AG04449 (cell line): ENCODE measurements at regions of chr11 and their contacts with region 1.

Region 1: DNA sequence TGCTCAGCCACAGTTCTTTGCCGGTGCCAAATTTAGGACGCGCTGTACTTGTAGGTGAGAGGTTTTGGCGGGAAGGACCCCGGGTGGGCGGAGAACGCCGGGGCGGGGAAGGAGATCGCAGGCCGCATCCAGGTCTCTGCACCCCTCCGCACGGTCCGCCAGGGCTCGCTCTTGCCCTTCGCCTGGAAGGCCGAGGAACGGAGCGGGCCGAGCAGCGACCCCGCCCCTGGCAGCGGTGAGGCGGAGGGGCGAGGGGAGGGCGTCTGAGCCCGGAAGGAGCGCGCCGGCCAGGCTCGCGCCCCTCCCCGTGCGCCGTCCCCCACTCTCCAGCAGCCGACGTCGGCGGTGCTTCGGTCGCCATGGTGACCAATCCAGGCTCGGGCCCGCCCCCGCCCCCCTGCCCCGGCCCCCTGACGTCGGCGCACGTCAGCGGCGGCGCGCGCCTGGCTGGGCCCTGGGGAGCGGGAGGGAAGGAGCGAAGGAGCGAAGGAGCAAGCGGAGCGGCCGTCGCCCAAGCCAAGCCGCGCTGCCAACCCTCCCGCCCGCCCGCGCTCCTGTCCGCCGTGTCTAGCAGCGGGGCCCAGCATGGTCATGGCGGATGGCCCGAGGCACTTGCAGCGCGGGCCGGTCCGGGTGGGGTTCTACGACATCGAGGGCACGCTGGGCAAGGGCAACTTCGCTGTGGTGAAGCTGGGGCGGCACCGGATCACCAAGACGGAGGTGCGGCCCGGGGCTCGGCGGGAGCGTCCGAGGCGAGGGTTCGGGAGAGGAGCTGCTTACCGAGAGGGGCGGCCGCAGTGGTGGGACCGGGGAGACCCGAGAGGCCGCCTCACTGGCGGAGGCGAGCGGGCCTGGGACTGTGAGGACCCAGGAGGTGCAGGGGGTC is at the start of gene SIK2:
- DNase-seq: no peak
- H3K4me3 ChIP-seq: peak within 1 kb of the TSS; percentile 78
- CTCF ChIP-seq: peak; percentile 98

Region 2: DNA sequence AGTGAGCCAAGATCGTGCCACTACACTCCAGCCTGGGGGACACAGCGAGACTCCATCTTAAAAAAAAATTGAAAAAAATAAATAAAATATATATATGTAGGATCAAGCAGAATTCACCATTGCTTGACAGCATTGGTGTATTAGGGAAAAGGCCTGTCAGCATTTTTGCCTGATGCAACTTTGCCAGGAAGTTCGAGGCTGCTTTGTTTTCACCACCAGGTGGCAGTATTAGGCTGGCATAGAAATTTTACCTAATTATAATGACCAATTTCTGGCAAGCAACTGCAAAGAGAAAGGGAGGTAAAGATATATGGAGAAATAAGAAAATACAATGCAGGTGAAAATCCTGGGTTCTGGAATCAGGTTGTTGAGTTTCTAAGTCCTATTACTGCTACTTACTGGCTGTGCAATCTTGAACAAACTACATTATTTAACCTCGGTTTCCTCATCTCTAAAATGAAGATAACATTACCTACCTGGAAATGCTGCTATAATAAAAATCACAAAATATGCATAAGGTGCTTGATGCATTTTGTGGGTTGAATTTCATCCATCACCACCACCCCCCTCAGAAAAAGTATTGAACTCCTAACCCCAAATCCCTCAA is 37.0 kb before region 1 on chr11:
- CTCF ChIA-PET with region 1: interaction called, 10 read pairs
- POLR2A ChIA-PET with region 1: no interaction called
- DNase-seq: no peak
- H3K4me3 ChIP-seq: no peak overlapping the region
- CTCF ChIP-seq: peak; percentile 62

Region 3: GRCh38 chr11:111612224-111612623 is 10.0 kb after region 1 on chr11:
- CTCF ChIA-PET with region 1: interaction called, 50 read pairs
- POLR2A ChIA-PET with region 1: no interaction called
- DNase-seq: no peak
- H3K4me3 ChIP-seq: no peak overlapping the region
- CTCF ChIP-seq: no peak

Region 4: GRCh38 chr11:111631666-111632039 is 29.4 kb after region 1 on chr11:
- CTCF ChIA-PET with region 1: interaction called, 13 read pairs
- POLR2A ChIA-PET with region 1: no interaction called
- DNase-seq: peak; percentile 63
- H3K4me3 ChIP-seq: no peak overlapping the region
- CTCF ChIP-seq: no peak

Region 5: DNA sequence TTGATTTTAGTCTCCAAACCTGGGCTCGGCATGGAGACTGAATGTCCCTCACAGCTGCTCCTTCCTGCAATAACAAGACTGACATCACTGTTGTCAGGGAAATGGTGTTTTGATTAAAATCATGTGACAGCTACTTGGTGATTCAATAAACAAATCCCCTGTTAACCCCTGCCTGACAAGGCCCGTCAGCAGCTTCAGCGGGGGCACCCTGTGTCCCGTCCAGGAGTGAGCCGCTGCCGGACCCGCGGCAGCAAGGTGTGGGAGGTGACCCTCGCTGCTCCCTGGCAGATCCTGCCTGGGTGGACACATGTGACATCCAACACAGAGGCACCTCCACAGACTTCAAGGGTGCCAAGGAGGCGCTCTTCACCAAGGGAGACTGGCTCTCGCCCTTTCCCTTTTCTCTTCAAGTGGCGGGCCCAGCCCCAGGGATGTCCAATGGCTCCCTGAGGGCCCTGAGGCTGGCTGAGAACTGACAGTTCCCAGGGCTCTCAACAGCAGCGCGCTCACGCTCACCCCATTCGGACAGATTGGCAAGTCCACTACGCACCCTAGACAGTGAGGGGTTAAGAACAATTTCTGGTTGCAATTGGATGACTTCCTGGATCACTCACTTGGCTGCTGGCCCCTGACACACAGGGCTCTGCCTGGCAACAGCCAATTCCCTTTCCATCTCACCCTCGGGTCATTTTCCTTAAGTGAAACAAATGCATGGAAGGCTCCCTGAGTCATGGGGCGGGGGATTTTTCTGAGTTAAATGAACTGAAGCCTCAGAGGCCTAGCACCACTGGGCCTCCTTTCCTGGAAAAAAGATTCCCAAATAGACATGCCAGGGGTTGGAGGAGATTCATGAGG is 133.3 kb after region 1 on chr11:
- CTCF ChIA-PET with region 1: interaction called, 22 read pairs
- POLR2A ChIA-PET with region 1: no interaction called
- DNase-seq: peak; percentile 93
- H3K4me3 ChIP-seq: peak overlapping the region; percentile 46
- CTCF ChIP-seq: no peak

Region 6: GRCh38 chr11:111777094-111778046 is 175.1 kb after region 1 on chr11:
- CTCF ChIA-PET with region 1: interaction called, 145 read pairs
- POLR2A ChIA-PET with region 1: no interaction called
- DNase-seq: peak; percentile 41
- H3K4me3 ChIP-seq: no peak overlapping the region
- CTCF ChIP-seq: peak; percentile 62

Region 7: DNA sequence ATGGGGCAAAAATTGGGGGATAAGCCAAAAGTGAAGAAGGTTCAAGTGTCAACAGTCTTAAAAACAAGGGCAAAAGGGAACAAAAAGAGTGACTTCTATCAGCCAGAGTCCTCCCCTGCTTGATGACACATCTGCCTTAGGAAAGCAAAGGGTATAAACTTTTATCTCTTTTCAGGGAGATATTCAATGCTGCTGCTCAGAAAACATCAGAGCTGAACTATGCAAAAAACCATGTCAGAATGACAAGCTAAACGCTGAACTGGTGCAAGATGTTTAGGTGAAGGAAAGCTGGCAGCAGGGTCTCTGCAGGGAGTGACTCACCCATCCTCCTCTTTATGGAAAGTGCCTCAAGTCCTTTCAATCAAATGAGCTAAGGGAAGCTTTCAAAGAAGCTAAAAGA is 244.4 kb after region 1 on chr11:
- CTCF ChIA-PET with region 1: interaction called, 21 read pairs
- POLR2A ChIA-PET with region 1: no interaction called
- DNase-seq: no peak
- H3K4me3 ChIP-seq: no peak overlapping the region
- CTCF ChIP-seq: no peak